Right ventricle myocardium inferior (tissue), 1 donor: ENCODE measurements at regions of chr2 and their contacts with region 1.

Region 1: GRCh38 chr2:55419679-55420438 is at the start of gene CCDC88A:
- DNase-seq: peak; percentile 95
- ATAC-seq: peak; percentile 98
- total RNA-seq, gene CCDC88A: 20.0 TPM

Region 2: GRCh38 chr2:55268907-55269644 is 150.8 kb before region 1 on chr2 and contains the start of gene MTIF2:
- intact Hi-C with region 1: loop called (anchors 5 kb)
- DNase-seq: peak; percentile 97
- ATAC-seq: peak; percentile 100
- total RNA-seq, gene MTIF2: 49.6 TPM

Region 3: GRCh38 chr2:55282110-55282917 is 137.5 kb before region 1 on chr2:
- intact Hi-C with region 1: loop called (anchors 5 kb)
- DNase-seq: peak; percentile 97
- ATAC-seq: peak; percentile 99

Region 4: DNA sequence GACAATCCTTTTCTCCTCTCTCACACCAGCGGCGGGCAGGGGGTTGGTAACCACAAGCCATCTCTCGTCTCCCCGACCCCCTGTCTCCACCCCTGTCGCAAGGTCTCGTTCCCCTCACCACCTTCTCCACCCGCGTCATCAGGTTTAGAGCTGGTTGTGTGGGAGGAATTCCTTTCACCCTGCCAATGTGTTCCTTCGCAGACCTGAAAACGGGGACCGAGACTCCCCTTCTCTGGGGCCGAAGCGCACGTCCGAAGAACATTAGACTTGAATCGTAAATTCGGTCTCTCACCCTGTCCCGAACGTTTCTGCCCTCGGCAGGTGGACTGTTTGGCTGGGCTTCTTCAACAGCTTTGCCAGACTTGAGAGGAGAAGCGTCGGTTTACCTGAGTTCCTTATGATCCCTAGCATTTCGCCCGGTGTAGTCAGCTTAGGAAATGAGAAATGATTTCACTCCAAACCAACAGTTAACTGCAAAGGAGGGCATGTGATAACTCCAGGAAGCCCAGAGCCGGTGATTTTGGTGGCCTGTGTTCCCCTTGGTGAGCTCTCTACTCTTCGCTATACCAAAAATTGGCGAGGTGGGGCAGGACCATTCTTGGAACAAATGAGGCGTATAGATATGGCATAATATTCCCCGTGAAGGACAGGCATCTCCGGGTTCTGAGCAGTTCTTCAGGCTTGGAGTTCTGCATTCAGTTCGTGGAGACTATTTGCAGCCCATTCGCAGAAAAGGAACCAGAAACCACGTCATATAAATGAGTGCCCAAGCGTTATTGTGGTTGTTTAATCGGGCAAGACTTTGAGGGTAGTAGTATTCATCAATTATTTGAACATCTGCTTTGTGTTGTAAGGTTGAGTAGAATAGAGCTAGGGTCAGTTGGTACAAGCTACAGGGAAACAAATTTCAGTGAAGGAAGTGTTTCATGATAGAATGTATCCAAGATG is 100.4 kb after region 1 on chr2:
- intact Hi-C with region 1: loop called (anchors 5 kb)
- DNase-seq: no peak
- ATAC-seq: peak; percentile 6

Region 5: GRCh38 chr2:55617175-55618024 is 197.5 kb after region 1 on chr2 and contains the start of gene PPP4R3B:
- intact Hi-C with region 1: loop called (anchors 1 kb)
- DNase-seq: peak; percentile 100
- ATAC-seq: peak; percentile 96
- total RNA-seq, gene PPP4R3B: 25.3 TPM